ENCODE measurements at regions of chr1 and their contacts with region 1.

Region 1: GRCh38 chr1:117985973-117986372 is 56.4 kb downstream of the WDR3 start:
- DNase-seq: no peak
- ATAC-seq: no peak
- H3K4me3 ChIP-seq: no peak overlapping the region
- H3K27ac ChIP-seq: no peak overlapping the region
- H3K4me1 ChIP-seq: no peaks in the 10 kb centered on the region
- H3K27me3 ChIP-seq: peaks cover 37% of the 10 kb centered on the region
- CTCF ChIP-seq: no peak
- POLR2A ChIP-seq: no peak
- RAD21 ChIP-seq: no peak

Region 2: DNA sequence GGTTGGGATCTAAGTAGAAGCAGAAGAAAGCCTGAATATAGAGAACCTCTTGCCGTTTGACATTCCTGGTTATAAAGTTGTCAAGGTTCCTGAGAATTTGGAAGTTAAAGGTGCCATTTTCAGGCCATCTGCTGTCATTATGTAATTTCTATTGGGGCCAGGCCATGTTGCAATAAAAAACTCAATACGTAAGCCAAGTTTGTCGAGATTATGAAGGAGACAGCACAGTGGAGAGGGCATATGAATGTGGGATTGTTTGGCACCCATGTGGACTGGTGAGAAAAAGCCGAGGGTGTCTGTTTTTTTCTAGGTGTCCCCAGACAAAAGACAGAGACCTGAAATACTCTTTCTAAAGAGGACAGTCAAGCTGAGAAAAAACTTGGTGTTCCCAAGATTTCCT is 1502.2 kb after region 1 on chr1:
- CTCF ChIA-PET with region 1: no interaction called
- POLR2A ChIA-PET with region 1: no interaction called
- RAD21 ChIA-PET with region 1: no interaction called
- intact Hi-C with region 1: loop called (anchors 5 kb)
- DNase-seq: no peak
- ATAC-seq: no peak
- H3K4me3 ChIP-seq: no peak overlapping the region
- H3K27ac ChIP-seq: no peak overlapping the region
- H3K4me1 ChIP-seq: no peaks in the 10 kb centered on the region
- H3K27me3 ChIP-seq: peaks cover 6% of the 10 kb centered on the region
- CTCF ChIP-seq: no peak
- POLR2A ChIP-seq: no peak
- RAD21 ChIP-seq: no peak